ENCODE measurements at regions of chr1 and their contacts with region 1.

Region 1: DNA sequence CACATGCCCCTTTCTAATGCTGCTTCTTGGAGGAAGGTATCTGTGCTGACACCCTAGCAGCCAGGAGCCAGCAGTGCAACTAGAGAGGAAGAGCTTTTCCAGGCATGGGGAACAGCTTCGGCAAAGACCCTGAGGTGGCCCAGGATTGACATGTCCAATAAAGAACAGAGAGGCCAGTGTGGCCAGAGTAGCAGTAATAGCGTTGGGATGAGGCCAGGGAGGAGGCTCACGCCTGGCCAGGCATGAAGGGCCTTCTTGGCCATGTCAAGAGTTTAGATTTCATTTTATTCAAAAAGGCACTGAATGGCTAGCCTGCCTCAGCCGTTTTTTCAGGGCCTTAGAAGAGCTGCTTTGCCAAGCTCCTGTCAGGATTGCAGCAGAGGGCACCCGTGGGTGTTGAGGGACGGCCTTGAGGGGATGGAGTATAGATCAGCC is 16.3 kb upstream of the ADAMTSL4 start:
- DNase-seq: no peak
- H3K4me3 ChIP-seq: no peak overlapping the region
- H3K27ac ChIP-seq: peak overlapping the region in 1 of 2 donors; percentile 23
- H3K4me1 ChIP-seq: no peaks in the 10 kb centered on the region
- H3K27me3 ChIP-seq: no peaks in the 10 kb centered on the region
- CTCF ChIP-seq: peak in 1 of 4 experiments; percentile 8
- POLR2A ChIP-seq: no peak

Region 2: GRCh38 chr1:150429805-150430204 is 103.1 kb before region 1 on chr1:
- intact Hi-C with region 1: no loop called
- DNase-seq: no peak
- H3K4me3 ChIP-seq: no peak overlapping the region
- H3K27ac ChIP-seq: no peak overlapping the region
- H3K4me1 ChIP-seq: no peaks in the 10 kb centered on the region
- H3K27me3 ChIP-seq: no peaks in the 10 kb centered on the region
- CTCF ChIP-seq: peak in 1 of 4 experiments; percentile 17
- POLR2A ChIP-seq: no peak

Region 3: GRCh38 chr1:150444232-150444631 is 88.7 kb before region 1 on chr1:
- intact Hi-C with region 1: no loop called
- DNase-seq: no peak
- H3K4me3 ChIP-seq: no peak overlapping the region
- H3K27ac ChIP-seq: no peak overlapping the region
- H3K4me1 ChIP-seq: no peaks in the 10 kb centered on the region
- H3K27me3 ChIP-seq: no peaks in the 10 kb centered on the region
- CTCF ChIP-seq: no peak
- POLR2A ChIP-seq: no peak

Region 4: DNA sequence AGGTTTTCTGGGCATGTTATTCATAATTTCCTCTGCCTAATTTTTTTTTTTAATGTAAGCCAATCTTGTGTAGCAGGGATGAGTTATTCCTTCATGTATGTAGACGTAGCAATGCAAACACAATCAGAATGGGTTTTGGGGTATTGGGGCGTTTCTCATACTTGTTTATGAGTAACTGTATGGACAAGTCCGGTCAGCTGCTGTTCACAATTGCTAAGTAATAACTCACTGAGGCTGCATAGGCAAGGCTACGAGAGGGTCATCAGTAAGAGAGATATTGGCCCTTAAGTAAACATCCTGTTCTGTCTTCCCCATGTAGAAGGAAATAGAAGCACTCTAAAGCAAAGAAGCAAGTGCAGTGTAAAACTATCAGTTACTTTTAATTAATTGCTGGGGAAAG is 55.2 kb before region 1 on chr1:
- intact Hi-C with region 1: loop called (anchors 5 kb)
- DNase-seq: no peak
- H3K4me3 ChIP-seq: no peak overlapping the region
- H3K27ac ChIP-seq: no peak overlapping the region
- H3K4me1 ChIP-seq: no peaks in the 10 kb centered on the region
- H3K27me3 ChIP-seq: no peaks in the 10 kb centered on the region
- CTCF ChIP-seq: no peak
- POLR2A ChIP-seq: no peak

Region 5: GRCh38 chr1:150486964-150487762 is 45.7 kb before region 1 on chr1 and contains the start of gene TARS2:
- intact Hi-C with region 1: loop called (anchors 5 kb)
- DNase-seq: peak; percentile 96
- H3K4me3 ChIP-seq: peak within 1 kb of the TSS; percentile 50 to 76
- H3K27ac ChIP-seq: peak within 1 kb of the TSS; percentile 63 to 80
- H3K4me1 ChIP-seq: peaks cover 4% of the 10 kb centered on the region
- H3K27me3 ChIP-seq: no peaks in the 10 kb centered on the region
- CTCF ChIP-seq: peak in 3 of 4 experiments; percentile 16 to 77 (median 68)
- POLR2A ChIP-seq: peak; percentile 60
- total RNA-seq, gene TARS2: 17.4 to 30.2 TPM